CD4-positive, alpha-beta memory T cell (primary cell): ENCODE measurements at regions of chr15 and their contacts with region 1.

Region 1: GRCh38 chr15:100602064-100602822 is at the starts of genes ASB7 and LINS1:
- DNase-seq: peak; percentile 99 to 100 (median 100)
- H3K4me3 ChIP-seq: peak within 1 kb of the TSS; percentile 85 to 97
- H3K4me3 Mint-ChIP-seq: no peak within 1 kb of the TSS
- H3K27ac ChIP-seq: peak within 1 kb of the TSS; percentile 95
- H3K27ac Mint-ChIP-seq: peak within 1 kb of the TSS in 6 of 7 donors; percentile 89 to 98 (median 94)
- H3K4me1 ChIP-seq: peaks cover 58% of the 10 kb centered on the region
- H3K4me1 Mint-ChIP-seq: peaks cover 36 to 56% (median 51%) of the 10 kb centered on the region in 4 donors
- H3K27me3 ChIP-seq: no peaks in the 10 kb centered on the region
- H3K27me3 Mint-ChIP-seq: no peaks in the 10 kb centered on the region
- total RNA-seq, gene ASB7: 19.5 to 20.0 TPM
- total RNA-seq, gene LINS1: 76.4 to 84.0 TPM

Region 2: DNA sequence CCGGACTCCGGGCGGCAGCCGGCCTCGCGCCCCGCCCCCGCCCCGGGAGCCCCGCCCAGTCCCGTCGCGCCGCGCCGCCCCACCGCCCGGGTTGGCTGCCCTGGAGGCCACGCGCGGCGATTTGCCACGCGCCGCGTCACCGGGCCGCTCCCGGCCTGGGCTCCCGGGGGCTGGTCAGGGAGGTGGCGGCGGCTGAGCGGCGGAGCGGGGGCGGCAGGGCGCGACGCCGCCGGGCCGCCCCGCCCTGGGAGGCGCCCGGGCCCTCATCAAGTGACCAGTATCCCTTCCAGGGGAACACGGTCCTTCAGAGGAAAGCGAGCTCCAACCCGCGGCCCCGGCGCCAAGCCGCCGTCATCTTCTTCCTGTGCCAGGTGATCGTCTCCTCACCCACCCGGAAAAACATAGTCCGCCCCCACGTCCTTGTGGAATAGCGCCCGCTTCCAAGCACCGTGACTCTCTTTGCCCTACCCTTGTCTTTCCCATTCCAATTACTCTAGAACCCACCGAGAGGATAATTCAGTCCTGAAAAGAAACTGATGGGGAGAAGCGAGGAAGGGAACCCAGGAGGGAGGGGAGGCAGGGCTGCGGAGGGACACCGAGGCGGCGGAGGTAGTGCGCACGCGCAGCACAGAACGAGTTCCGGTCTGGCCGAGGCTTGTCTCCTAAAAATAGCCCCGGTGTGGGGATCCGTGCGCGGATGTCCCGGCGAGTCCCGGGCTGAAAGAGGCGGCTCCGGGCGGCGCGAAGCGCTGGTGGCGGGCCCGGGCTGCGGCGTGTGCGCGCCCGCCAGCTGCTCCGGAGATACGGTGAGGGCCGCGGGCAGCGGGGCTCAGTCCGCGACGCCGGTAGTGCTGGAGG is 1036.7 kb before region 1 on chr15 and contains the start of gene MEF2A:
- CTCF ChIA-PET with region 1: no interaction called
- POLR2A ChIA-PET with region 1: no interaction called
- intact Hi-C with region 1: loop called (anchors 10 kb)
- DNase-seq: peak; percentile 92 to 94 (median 92)
- H3K4me3 ChIP-seq: peak within 1 kb of the TSS; percentile 63 to 99
- H3K4me3 Mint-ChIP-seq: peak within 1 kb of the TSS; percentile 95 to 100 (median 98)
- H3K27ac ChIP-seq: peak within 1 kb of the TSS; percentile 85
- H3K27ac Mint-ChIP-seq: peak within 1 kb of the TSS; percentile 95 to 99 (median 97)
- H3K4me1 ChIP-seq: peaks cover 29% of the 10 kb centered on the region
- H3K4me1 Mint-ChIP-seq: peaks cover 28 to 45% (median 36%) of the 10 kb centered on the region in 4 donors
- H3K27me3 ChIP-seq: no peaks in the 10 kb centered on the region
- H3K27me3 Mint-ChIP-seq: peaks cover 0 to 3% of the 10 kb centered on the region in 2 donors
- total RNA-seq, gene MEF2A: 27.6 to 27.8 TPM

Region 3: DNA sequence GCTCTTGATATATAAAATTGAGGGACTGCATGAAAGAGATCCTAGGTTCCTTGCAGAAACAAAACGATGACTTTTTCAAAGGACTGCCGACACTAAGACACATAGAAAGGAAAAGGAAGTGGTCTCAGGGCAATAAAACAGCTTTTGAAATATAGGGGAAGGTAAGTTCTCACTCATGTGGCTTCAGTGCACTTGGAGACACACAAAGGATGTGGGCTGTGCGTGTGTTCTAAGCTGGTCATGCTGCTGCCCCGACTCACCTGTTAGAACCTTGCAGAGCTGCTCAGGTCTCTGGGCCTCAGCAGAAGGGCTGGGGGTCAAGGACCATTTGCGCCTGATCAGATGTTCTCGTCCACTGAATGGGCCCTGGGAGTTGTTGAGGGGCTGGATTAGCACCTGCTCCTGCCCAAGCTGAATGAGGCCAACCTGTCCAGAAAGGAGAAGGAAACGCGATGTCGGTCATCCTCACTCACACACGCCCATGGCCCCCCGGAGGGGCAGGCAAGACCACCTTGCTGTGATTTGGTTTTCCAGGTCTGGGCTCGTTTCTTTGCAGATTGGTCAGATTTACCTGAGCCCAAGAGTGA is 271.5 kb before region 1 on chr15:
- CTCF ChIA-PET with region 1: no interaction called
- POLR2A ChIA-PET with region 1: interaction called, 15 read pairs
- intact Hi-C with region 1: no loop called
- DNase-seq: peak; percentile 56 to 77 (median 69)
- H3K4me3 ChIP-seq: peak overlapping the region in 1 of 2 donors; percentile 27
- H3K4me3 Mint-ChIP-seq: peak overlapping the region; percentile 64 to 86 (median 72)
- H3K27ac ChIP-seq: peak overlapping the region; percentile 27
- H3K27ac Mint-ChIP-seq: peak overlapping the region; percentile 13 to 76 (median 64)
- H3K4me1 ChIP-seq: peaks cover 62% of the 10 kb centered on the region
- H3K4me1 Mint-ChIP-seq: peaks cover 40 to 80% (median 60%) of the 10 kb centered on the region in 4 donors
- H3K27me3 ChIP-seq: no peaks in the 10 kb centered on the region
- H3K27me3 Mint-ChIP-seq: no peaks in the 10 kb centered on the region

Region 4: GRCh38 chr15:100349696-100350433 is 252.4 kb before region 1 on chr15:
- CTCF ChIA-PET with region 1: interaction called, 50 read pairs
- POLR2A ChIA-PET with region 1: interaction called, 18 read pairs
- intact Hi-C with region 1: no loop called
- DNase-seq: peak; percentile 82 to 87 (median 83)
- H3K4me3 ChIP-seq: peak overlapping the region; percentile 70 to 98
- H3K4me3 Mint-ChIP-seq: peak overlapping the region; percentile 95 to 97 (median 96)
- H3K27ac ChIP-seq: peak overlapping the region; percentile 85
- H3K27ac Mint-ChIP-seq: peak overlapping the region; percentile 81 to 98 (median 93)
- H3K4me1 ChIP-seq: peaks cover 5% of the 10 kb centered on the region
- H3K4me1 Mint-ChIP-seq: peaks cover 6 to 18% (median 10%) of the 10 kb centered on the region in 4 donors
- H3K27me3 ChIP-seq: peaks cover 7% of the 10 kb centered on the region
- H3K27me3 Mint-ChIP-seq: peaks cover 13 to 24% of the 10 kb centered on the region in 2 donors

Region 5: GRCh38 chr15:101251830-101252820 is 649.9 kb after region 1 on chr15 and contains the start of gene CHSY1:
- CTCF ChIA-PET with region 1: no interaction called
- POLR2A ChIA-PET with region 1: interaction called, 3 read pairs
- intact Hi-C with region 1: loop called (anchors 5 kb)
- DNase-seq: peak; percentile 81 to 90 (median 86)
- H3K4me3 ChIP-seq: peak within 1 kb of the TSS; percentile 30 to 66
- H3K4me3 Mint-ChIP-seq: peak within 1 kb of the TSS; percentile 94 to 96 (median 95)
- H3K27ac ChIP-seq: peak within 1 kb of the TSS; percentile 42
- H3K27ac Mint-ChIP-seq: peak within 1 kb of the TSS; percentile 90 to 95 (median 93)
- H3K4me1 ChIP-seq: peaks cover 39% of the 10 kb centered on the region
- H3K4me1 Mint-ChIP-seq: peaks cover 29 to 43% (median 31%) of the 10 kb centered on the region in 4 donors
- H3K27me3 ChIP-seq: no peaks in the 10 kb centered on the region
- H3K27me3 Mint-ChIP-seq: no peaks in the 10 kb centered on the region
- total RNA-seq, gene CHSY1: 11.1 to 11.9 TPM

Region 6: DNA sequence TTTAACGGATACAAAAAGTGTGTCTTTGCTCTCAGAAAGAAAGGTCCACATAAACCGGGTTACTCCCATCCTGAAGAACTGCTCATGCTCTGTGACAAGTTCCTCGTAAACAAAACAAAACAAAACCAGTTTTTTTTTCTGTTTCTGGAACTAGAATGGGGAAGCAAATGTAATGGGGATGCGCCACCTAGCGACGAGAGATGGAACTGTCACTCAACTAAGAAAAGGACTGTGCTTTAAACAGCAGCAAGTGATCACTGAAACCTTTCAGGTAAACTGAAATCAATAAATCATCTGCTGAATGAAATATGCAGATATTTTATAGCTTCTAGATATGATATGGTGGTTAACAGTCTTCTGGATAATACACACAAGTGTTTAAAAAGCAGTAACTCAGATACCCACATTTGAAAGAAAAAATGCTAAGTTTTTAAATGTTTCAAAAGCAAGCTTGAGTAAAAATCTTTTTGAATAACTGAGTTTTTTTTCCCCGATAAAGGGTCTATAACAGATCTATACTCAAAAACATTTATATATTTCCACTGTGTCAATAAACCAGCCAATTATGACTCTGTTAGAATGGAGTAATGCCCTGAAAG is 1039.0 kb after region 1 on chr15:
- CTCF ChIA-PET with region 1: no interaction called
- POLR2A ChIA-PET with region 1: no interaction called
- intact Hi-C with region 1: loop called (anchors 10 kb)
- DNase-seq: peak; percentile 73 to 78 (median 77)
- H3K4me3 ChIP-seq: no peak overlapping the region
- H3K4me3 Mint-ChIP-seq: peak overlapping the region in 5 of 8 donors; percentile 4 to 52 (median 18)
- H3K27ac ChIP-seq: peak overlapping the region; percentile 67
- H3K27ac Mint-ChIP-seq: peak overlapping the region; percentile 80 to 95 (median 94)
- H3K4me1 ChIP-seq: peaks cover 25% of the 10 kb centered on the region
- H3K4me1 Mint-ChIP-seq: peaks cover 20 to 30% (median 25%) of the 10 kb centered on the region in 4 donors
- H3K27me3 ChIP-seq: no peaks in the 10 kb centered on the region
- H3K27me3 Mint-ChIP-seq: no peaks in the 10 kb centered on the region